Mammary epithelial cell (primary cell): ENCODE measurements at regions of chr22 and their contacts with region 1.

Region 1: DNA sequence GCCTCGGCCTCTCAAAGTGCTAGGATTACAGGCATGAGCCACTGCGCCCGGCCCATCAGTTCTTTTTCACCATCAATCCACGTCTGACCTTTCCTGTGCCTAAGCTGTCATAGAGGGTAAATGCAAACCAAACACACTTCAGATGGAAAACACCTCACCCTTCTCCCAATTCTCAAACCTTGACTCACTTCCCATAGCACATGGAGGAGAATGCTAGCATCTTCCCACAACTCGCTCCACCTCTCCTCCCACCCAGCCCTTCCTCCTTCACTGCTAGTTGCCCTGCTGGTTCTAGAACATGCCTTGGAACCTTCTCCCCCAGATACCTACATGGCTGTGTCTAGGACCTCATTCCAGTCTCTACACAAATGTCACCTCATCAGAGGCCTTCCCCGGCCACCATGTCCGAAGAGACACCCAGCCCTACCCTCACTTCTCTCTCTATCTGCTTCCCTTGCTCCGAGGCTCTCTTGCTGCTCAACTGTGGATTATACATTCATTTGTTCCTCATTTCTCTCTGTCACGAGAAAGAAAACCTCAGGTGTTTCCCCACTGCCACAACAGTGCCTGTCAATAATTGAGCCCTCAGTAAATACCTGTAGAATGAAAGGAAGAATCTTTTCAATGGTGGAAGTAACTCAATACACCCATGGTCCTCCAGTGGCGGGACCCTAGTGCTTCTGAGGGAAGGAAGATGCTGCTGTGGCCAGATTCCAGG is 21.3 kb upstream of the NCF4 start:
- DNase-seq: peak; percentile 46
- H3K4me3 ChIP-seq: no peak overlapping the region
- H3K27ac ChIP-seq: no peak overlapping the region
- H3K4me1 ChIP-seq: peaks cover 3% of the 10 kb centered on the region
- H3K27me3 ChIP-seq: no peaks in the 10 kb centered on the region
- CTCF ChIP-seq: no peak

Region 2: DNA sequence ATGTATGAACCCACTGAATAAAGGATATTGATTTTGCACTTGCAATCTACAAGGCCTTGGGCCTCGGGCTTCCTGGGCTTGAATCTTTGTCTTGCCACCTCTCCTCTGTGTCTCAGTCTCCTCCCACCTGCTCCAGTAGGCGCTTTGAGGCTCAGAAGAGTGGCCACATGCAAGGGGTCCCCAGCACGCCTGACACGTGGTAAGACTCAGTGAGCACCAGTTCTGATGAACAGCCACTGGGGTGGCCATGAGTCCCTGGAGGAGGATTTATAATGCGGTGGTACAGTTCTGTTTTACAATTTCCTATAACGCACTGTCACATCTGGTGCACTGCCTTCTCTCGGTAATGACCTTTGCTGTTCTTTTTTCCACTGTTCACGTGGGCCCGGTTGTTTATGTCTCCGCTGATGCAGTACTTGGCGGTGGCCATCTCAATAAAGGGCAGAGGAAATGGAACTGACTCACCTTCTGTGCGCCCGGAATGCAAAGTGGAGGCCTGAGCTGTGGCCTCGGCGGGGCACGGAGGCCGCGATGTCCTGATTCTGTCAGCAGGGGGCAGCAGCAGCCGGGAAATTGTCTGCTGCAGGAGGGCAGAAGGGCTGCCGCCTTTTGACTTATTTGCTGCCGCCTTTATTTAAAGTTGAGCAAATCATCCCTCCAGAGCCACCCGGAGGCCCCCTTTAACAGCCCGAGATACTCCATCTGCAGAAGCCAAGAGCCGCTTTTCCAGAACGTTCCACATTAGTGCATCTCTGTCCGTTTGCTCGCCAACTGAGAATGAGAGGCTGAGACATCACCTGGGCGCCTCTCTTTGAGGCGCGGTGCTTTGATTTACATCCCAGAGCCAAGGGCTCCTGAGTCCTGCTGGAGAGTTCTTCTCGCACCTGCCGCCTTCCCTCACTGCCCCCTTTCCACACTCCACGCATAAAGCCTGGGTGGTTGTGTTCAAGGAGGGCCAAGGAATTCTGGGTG is 57.6 kb before region 1 on chr22:
- CTCF ChIA-PET with region 1: no interaction called
- dilution Hi-C with region 1: loop called (anchors 5 kb)
- in situ Hi-C with region 1: loop called in 1 of 2 experiments (anchors 10 kb)
- intact Hi-C with region 1: no loop called
- DNase-seq: peak; percentile 77
- H3K4me3 ChIP-seq: no peak overlapping the region
- H3K27ac ChIP-seq: no peak overlapping the region
- H3K4me1 ChIP-seq: peaks cover 4% of the 10 kb centered on the region
- H3K27me3 ChIP-seq: no peaks in the 10 kb centered on the region
- CTCF ChIP-seq: peak; percentile 86 to 87

Region 3: GRCh38 chr22:36901411-36902142 is 62.1 kb after region 1 on chr22:
- CTCF ChIA-PET with region 1: no interaction called
- dilution Hi-C with region 1: no loop called
- in situ Hi-C with region 1: no loop called
- intact Hi-C with region 1: no loop called
- DNase-seq: no peak
- H3K4me3 ChIP-seq: no peak overlapping the region
- H3K27ac ChIP-seq: no peak overlapping the region
- H3K4me1 ChIP-seq: no peaks in the 10 kb centered on the region
- H3K27me3 ChIP-seq: peaks cover 2% of the 10 kb centered on the region
- CTCF ChIP-seq: no peak

Region 4: GRCh38 chr22:37267135-37267587 is 427.6 kb after region 1 on chr22:
- CTCF ChIA-PET with region 1: no interaction called
- dilution Hi-C with region 1: no loop called
- in situ Hi-C with region 1: no loop called
- intact Hi-C with region 1: no loop called
- DNase-seq: no peak
- H3K4me3 ChIP-seq: peak overlapping the region; percentile 25 to 38 (median 31)
- H3K27ac ChIP-seq: no peak overlapping the region
- H3K4me1 ChIP-seq: peaks cover 2% of the 10 kb centered on the region
- H3K27me3 ChIP-seq: no peaks in the 10 kb centered on the region
- CTCF ChIP-seq: peak; percentile 70 to 87